Activated T-helper 2 cell treated with anti-CD3 and anti-CD28 coated beads, Interferon-gamma antibody, Interleukin-2, Interleukin-4, amounts not matched to agents 10 μg/mL and 5 μg/mL and 100 μg/mL, durations not matched to agents 14 hours and 24 hours and 36 hours (primary cell): ENCODE measurements at regions of chr10 and their contacts with region 1.

Region 1: GRCh38 chr10:35195361-35196306 is 69.0 kb downstream of the CREM start:
- DNase-seq: peak; percentile 76
- H3K4me3 Mint-ChIP-seq: peak overlapping the region; percentile 95
- H3K27ac Mint-ChIP-seq: peak overlapping the region; percentile 99
- H3K4me1 Mint-ChIP-seq: peaks cover 44% of the 10 kb centered on the region
- H3K27me3 Mint-ChIP-seq: no peaks in the 10 kb centered on the region

Region 2: GRCh38 chr10:35132727-35133126 is 62.9 kb before region 1 on chr10:
- intact Hi-C with region 1: loop called (anchors 1 kb)
- DNase-seq: no peak
- H3K4me3 Mint-ChIP-seq: peak overlapping the region; percentile 38
- H3K27ac Mint-ChIP-seq: peak overlapping the region; percentile 85
- H3K4me1 Mint-ChIP-seq: peaks cover 60% of the 10 kb centered on the region
- H3K27me3 Mint-ChIP-seq: no peaks in the 10 kb centered on the region

Region 3: DNA sequence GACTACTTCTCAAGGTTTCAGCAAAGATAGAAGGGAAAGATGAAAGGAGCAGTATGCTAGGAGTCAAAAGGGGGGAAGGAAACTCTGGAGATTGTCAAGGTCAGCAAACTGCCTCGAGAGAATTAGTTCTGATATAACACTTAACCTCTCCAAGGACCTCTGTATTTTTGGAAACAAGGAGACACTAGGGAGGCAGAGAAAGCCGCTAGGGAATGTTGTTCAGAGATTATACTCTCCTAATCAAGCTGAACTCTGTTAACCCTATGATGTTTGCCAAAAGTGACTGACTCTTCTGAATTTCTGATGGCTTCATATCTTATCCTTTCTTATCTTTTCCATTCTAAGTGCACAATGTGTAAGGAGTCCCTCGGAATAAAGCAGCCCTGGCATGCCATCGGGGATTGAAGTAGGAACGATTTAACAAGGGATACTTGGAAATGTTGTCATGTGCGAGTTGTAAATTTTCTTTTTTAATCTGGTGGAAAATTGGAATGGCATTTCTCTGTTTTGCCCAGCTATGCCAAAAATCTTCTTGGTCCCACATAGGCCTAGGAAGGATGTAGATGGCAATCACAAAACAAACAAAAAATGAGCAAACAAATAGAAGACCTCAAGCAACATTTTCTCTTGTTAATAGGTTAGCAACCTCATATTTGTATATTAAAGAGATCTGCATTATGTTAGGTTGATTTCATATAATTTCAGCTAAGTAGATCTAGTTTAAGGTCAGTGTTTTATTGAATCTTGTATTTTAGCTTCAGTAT is 41.7 kb before region 1 on chr10:
- intact Hi-C with region 1: loop called (anchors 1 kb)
- DNase-seq: no peak
- H3K4me3 Mint-ChIP-seq: no peak overlapping the region
- H3K27ac Mint-ChIP-seq: no peak overlapping the region
- H3K4me1 Mint-ChIP-seq: peaks cover 40% of the 10 kb centered on the region
- H3K27me3 Mint-ChIP-seq: no peaks in the 10 kb centered on the region

Region 4: DNA sequence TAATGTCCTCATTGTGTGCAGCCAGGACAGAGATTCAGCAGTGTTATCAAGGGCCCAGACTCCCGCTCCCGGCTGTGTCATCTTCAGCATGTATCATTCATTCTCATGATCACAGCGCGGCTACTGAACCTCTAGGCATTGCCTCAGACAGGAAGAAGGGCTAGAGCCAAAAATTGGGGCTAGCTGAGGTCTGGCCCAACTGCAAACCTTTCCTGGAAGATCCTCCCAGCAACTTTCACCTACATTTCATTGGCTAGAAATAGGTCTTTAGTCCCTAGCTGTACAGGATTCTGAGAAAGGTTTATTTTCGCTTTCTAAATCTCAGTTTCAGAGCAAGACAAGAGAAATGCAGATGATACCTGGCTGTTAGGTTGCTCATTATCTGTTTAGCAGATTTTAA is 12.9 kb after region 1 on chr10:
- intact Hi-C with region 1: loop called (anchors 1 kb)
- DNase-seq: peak; percentile 64
- H3K4me3 Mint-ChIP-seq: peak overlapping the region; percentile 59
- H3K27ac Mint-ChIP-seq: peak overlapping the region; percentile 87
- H3K4me1 Mint-ChIP-seq: peaks cover 57% of the 10 kb centered on the region
- H3K27me3 Mint-ChIP-seq: no peaks in the 10 kb centered on the region

Region 5: GRCh38 chr10:35218339-35218955 is 22.8 kb after region 1 on chr10:
- intact Hi-C with region 1: loop called (anchors 1 kb)
- DNase-seq: peak; percentile 78
- H3K4me3 Mint-ChIP-seq: peak overlapping the region; percentile 66
- H3K27ac Mint-ChIP-seq: peak overlapping the region; percentile 97
- H3K4me1 Mint-ChIP-seq: peaks cover 62% of the 10 kb centered on the region
- H3K27me3 Mint-ChIP-seq: no peaks in the 10 kb centered on the region